Esophagus muscularis mucosa (tissue), 4 donors: ENCODE measurements at regions of chr17 and their contacts with region 1.

Region 1: DNA sequence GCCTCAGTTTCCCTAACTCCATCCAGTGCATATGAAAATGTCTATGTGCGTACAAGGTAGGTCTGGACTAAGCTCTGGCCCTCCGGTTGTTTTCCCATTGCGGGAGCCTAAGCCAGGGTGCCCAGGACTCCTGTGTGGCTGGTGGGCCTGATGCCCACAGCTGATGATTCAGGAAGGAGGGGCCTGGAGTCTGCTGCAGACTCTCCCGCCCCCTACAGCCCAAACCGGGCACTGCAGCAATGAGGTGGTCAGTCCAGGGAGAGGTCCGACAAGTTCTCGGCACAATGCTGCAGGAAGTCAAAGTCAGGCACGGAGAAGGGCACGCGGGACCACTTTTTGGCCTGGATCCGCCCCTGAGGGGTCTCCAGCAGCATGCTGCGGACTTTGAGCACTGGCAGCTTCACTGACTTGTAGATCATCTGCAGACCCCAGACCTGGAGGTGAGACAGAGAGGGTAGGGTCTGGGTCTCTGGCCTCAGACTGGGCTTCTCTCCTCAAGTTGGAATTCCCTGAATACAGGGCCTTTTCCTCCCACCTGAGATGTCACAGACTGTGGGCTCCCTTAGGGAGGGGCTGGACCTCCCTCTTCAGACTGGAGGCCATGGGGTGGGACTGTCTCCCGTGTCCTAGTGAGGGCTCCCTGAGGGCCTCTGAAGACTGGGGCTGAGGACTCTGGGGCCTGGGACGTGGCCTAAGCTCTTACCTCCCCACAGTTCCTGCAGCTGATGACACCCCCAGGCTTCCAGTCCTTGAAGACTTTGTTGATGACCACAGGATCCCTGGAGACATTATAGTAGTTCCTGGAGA is 3.4 kb upstream of the ZNF385C start:
- DNase-seq: no peak
- H3K4me3 ChIP-seq: no peak overlapping the region
- H3K27ac ChIP-seq: no peak overlapping the region
- H3K4me1 ChIP-seq: peaks cover 6 to 19% (median 13%) of the 10 kb centered on the region in 4 donors
- H3K27me3 ChIP-seq: peaks cover 0 to 21% (median 9%) of the 10 kb centered on the region in 4 donors
- CTCF ChIP-seq: peak; percentile 62 to 78 (median 63)
- EP300 ChIP-seq: no peak
- POLR2A ChIP-seq: no peak

Region 2: DNA sequence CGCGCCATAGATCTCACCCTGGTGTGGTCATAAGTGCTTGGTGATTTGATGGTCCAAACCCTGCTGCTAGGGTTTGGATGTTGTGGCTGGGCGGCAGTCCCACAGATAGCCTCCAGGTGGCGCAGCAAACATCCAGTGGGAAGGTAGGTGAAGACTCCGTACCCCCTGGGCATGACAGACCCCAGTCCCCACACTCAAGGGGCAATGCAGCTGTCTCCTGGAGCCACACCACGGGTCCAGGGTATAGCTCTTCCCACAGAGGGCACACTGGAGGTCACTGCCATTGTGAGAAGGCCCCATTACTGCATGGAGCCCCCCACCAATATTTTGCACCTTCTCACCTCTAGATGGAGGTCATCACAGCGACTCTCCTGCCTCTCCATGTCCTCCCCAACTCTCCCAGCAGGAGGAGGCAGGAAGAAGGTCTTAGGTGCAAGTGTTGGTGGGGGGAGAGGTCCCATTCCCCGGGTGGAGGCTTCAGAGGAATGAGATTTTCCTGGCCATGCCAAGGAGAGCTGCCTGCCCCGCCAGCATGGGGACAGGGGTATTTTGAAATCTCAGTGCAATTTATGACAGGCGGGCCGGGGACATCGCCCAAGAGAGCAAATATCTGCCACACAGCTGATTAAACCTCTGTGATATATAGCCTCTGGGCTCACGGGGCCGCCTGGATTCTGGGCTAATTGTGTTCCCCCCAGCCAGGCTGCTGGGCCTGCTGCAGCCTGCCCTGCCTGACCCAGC is 34.2 kb before region 1 on chr17:
- intact Hi-C with region 1: loop called (anchors 5 kb)
- DNase-seq: peak; percentile 93
- H3K4me3 ChIP-seq: no peak overlapping the region
- H3K27ac ChIP-seq: no peak overlapping the region
- H3K4me1 ChIP-seq: peaks cover 6 to 9% (median 8%) of the 10 kb centered on the region in 4 donors
- H3K27me3 ChIP-seq: peaks cover 4 to 47% (median 12%) of the 10 kb centered on the region in 4 donors
- CTCF ChIP-seq: peak; percentile 81 to 93 (median 84)
- EP300 ChIP-seq: no peak
- POLR2A ChIP-seq: no peak